MCF 10A (cell line): ENCODE measurements at regions of chr10 and their contacts with region 1.

Region 1: DNA sequence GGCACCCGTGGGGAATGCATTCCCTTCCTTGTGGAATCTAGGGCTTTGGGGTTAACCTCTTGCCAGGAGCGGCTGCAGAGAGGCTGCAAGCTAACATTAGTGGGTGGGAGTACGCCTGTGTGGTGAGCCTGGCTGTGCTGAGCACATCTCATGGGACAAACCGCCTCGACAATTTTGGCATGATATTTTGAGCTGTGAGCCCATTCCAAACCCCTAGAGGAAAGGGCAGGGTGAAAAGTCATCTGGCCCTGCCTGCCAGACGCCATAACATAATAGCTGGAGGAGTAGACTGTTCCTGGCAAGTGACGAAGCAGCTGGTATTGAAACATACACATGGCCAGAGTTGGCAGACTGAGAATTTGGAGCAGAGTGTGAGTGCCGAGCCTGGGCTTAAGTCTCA is 110.0 kb downstream of the TACC2 start:
- DNase-seq: no peak
- H3K4me3 Mint-ChIP-seq: no peak overlapping the region
- H3K27ac Mint-ChIP-seq: no peak overlapping the region
- H3K4me1 Mint-ChIP-seq: peaks cover 16% of the 10 kb centered on the region
- H3K27me3 Mint-ChIP-seq: no peaks in the 10 kb centered on the region
- CTCF ChIP-seq: no peak

Region 2: GRCh38 chr10:122019414-122019975 is 79.4 kb before region 1 on chr10:
- CTCF ChIA-PET with region 1: no interaction called
- POLR2A ChIA-PET with region 1: interaction called, 11 read pairs
- intact Hi-C with region 1: no loop called
- DNase-seq: peak; percentile 81
- H3K4me3 Mint-ChIP-seq: peak overlapping the region; percentile 68
- H3K27ac Mint-ChIP-seq: peak overlapping the region; percentile 86
- H3K4me1 Mint-ChIP-seq: peaks cover 21% of the 10 kb centered on the region
- H3K27me3 Mint-ChIP-seq: no peaks in the 10 kb centered on the region
- CTCF ChIP-seq: no peak

Region 3: GRCh38 chr10:122191936-122192541 is 93.1 kb after region 1 on chr10:
- CTCF ChIA-PET with region 1: no interaction called
- POLR2A ChIA-PET with region 1: no interaction called
- intact Hi-C with region 1: no loop called
- DNase-seq: no peak
- H3K4me3 Mint-ChIP-seq: no peak overlapping the region
- H3K27ac Mint-ChIP-seq: no peak overlapping the region
- H3K4me1 Mint-ChIP-seq: no peaks in the 10 kb centered on the region
- H3K27me3 Mint-ChIP-seq: no peaks in the 10 kb centered on the region
- CTCF ChIP-seq: no peak